HepG2 (cell line): ENCODE measurements at regions of chr2 and their contacts with region 1.

Region 1: GRCh38 chr2:226583715-226584114 is 215.9 kb downstream of the IRS1 start:
- DNase-seq: peak; percentile 94
- ATAC-seq: peak; percentile 98
- H3K4me3 ChIP-seq: no peak overlapping the region
- H3K27ac ChIP-seq: peak overlapping the region; percentile 68
- H3K4me1 ChIP-seq: peaks cover 65% of the 10 kb centered on the region
- H3K27me3 ChIP-seq: no peaks in the 10 kb centered on the region
- CTCF ChIP-seq: no peak
- EP300 ChIP-seq: peak in 1 of 2 experiments; percentile 94; a peak in 2 of 4 replicates
- POLR2A ChIP-seq: no peak
- RAD21 ChIP-seq: no peak; the same call in 1 of the 2 replicates

Region 2: GRCh38 chr2:226554701-226555100 is 29.0 kb before region 1 on chr2:
- CTCF ChIA-PET with region 1: no interaction called
- POLR2A ChIA-PET with region 1: no interaction called
- in situ Hi-C with region 1: no loop called
- intact Hi-C with region 1: loop called (anchors 2 kb)
- DNase-seq: no peak
- ATAC-seq: no peak
- H3K4me3 ChIP-seq: no peak overlapping the region
- H3K27ac ChIP-seq: no peak overlapping the region
- H3K4me1 ChIP-seq: peaks cover 36% of the 10 kb centered on the region
- H3K27me3 ChIP-seq: no peaks in the 10 kb centered on the region
- CTCF ChIP-seq: no peak
- EP300 ChIP-seq: no peak
- POLR2A ChIP-seq: no peak
- RAD21 ChIP-seq: no peak

Region 3: GRCh38 chr2:226600184-226600583 is 16.5 kb after region 1 on chr2:
- CTCF ChIA-PET with region 1: no interaction called
- POLR2A ChIA-PET with region 1: no interaction called
- in situ Hi-C with region 1: no loop called
- intact Hi-C with region 1: loop called (anchors 2 kb)
- DNase-seq: peak; percentile 86
- ATAC-seq: peak; percentile 78
- H3K4me3 ChIP-seq: no peak overlapping the region
- H3K27ac ChIP-seq: no peak overlapping the region
- H3K4me1 ChIP-seq: peaks cover 24% of the 10 kb centered on the region
- H3K27me3 ChIP-seq: no peaks in the 10 kb centered on the region
- CTCF ChIP-seq: no peak
- EP300 ChIP-seq: peak in 1 of 2 experiments; percentile 80; a peak in 2 of 4 replicates
- POLR2A ChIP-seq: no peak
- RAD21 ChIP-seq: no peak